ENCODE measurements at regions of chr7 and their contacts with region 1.

Region 1: GRCh38 chr7:77644774-77645173 is 51.5 kb upstream of the RSBN1L start:
- DNase-seq: no peak
- ATAC-seq: no peak
- H3K4me3 ChIP-seq: no peak overlapping the region
- H3K4me3 Mint-ChIP-seq: no peak overlapping the region
- H3K27ac ChIP-seq: no peak overlapping the region
- H3K27ac Mint-ChIP-seq: no peak overlapping the region
- H3K4me1 ChIP-seq: no peaks in the 10 kb centered on the region
- H3K4me1 Mint-ChIP-seq: no peaks in the 10 kb centered on the region
- H3K27me3 ChIP-seq: no peaks in the 10 kb centered on the region
- H3K27me3 Mint-ChIP-seq: no peaks in the 10 kb centered on the region
- CTCF ChIP-seq: no peak

Region 2: GRCh38 chr7:77542409-77542808 is 102.4 kb before region 1 on chr7:
- CTCF ChIA-PET with region 1: no interaction called
- POLR2A ChIA-PET with region 1: interaction called, 12 read pairs
- intact Hi-C with region 1: no loop called
- DNase-seq: no peak
- ATAC-seq: no peak
- H3K4me3 ChIP-seq: no peak overlapping the region
- H3K4me3 Mint-ChIP-seq: no peak overlapping the region
- H3K27ac ChIP-seq: peak overlapping the region in 1 of 2 donors; percentile 53
- H3K27ac Mint-ChIP-seq: peak overlapping the region; percentile 1
- H3K4me1 ChIP-seq: peaks cover 8 to 22% of the 10 kb centered on the region in 2 donors
- H3K4me1 Mint-ChIP-seq: peaks cover 46% of the 10 kb centered on the region
- H3K27me3 ChIP-seq: no peaks in the 10 kb centered on the region
- H3K27me3 Mint-ChIP-seq: no peaks in the 10 kb centered on the region
- CTCF ChIP-seq: no peak

Region 3: GRCh38 chr7:77674878-77675277 is 30.1 kb after region 1 on chr7:
- CTCF ChIA-PET with region 1: no interaction called
- POLR2A ChIA-PET with region 1: no interaction called
- intact Hi-C with region 1: no loop called
- DNase-seq: no peak
- ATAC-seq: no peak
- H3K4me3 ChIP-seq: no peak overlapping the region
- H3K4me3 Mint-ChIP-seq: no peak overlapping the region
- H3K27ac ChIP-seq: no peak overlapping the region
- H3K27ac Mint-ChIP-seq: no peak overlapping the region
- H3K4me1 ChIP-seq: no peaks in the 10 kb centered on the region
- H3K4me1 Mint-ChIP-seq: no peaks in the 10 kb centered on the region
- H3K27me3 ChIP-seq: no peaks in the 10 kb centered on the region
- H3K27me3 Mint-ChIP-seq: no peaks in the 10 kb centered on the region
- CTCF ChIP-seq: no peak

Region 4: DNA sequence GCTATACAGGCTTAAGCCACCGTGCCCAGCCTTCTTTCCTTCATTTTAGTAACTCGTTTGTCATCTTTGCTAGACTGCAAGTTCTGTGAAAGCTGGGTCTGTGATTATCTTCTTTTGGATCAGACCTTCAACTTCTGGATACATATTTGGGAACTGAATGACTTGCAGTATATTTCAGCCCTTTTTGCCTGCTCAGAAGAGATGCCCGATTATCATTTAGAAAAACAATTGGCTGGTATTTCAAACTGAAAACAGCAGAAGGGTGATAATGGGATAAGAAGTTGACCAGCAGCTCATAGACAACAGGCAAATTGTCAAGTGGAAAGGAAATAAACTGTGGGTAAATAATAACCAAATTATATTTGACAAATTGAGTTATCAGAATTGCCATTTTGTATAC is 66.1 kb after region 1 on chr7:
- CTCF ChIA-PET with region 1: no interaction called
- POLR2A ChIA-PET with region 1: no interaction called
- intact Hi-C with region 1: no loop called
- DNase-seq: no peak
- ATAC-seq: no peak
- H3K4me3 ChIP-seq: no peak overlapping the region
- H3K4me3 Mint-ChIP-seq: no peak overlapping the region
- H3K27ac ChIP-seq: no peak overlapping the region
- H3K27ac Mint-ChIP-seq: no peak overlapping the region
- H3K4me1 ChIP-seq: peaks cover 0 to 3% of the 10 kb centered on the region in 2 donors
- H3K4me1 Mint-ChIP-seq: peaks cover 42% of the 10 kb centered on the region
- H3K27me3 ChIP-seq: no peaks in the 10 kb centered on the region
- H3K27me3 Mint-ChIP-seq: no peaks in the 10 kb centered on the region
- CTCF ChIP-seq: no peak

Region 5: GRCh38 chr7:77771901-77772300 is 127.1 kb after region 1 on chr7:
- CTCF ChIA-PET with region 1: no interaction called
- POLR2A ChIA-PET with region 1: no interaction called
- intact Hi-C with region 1: no loop called
- DNase-seq: no peak
- ATAC-seq: no peak
- H3K4me3 ChIP-seq: no peak overlapping the region
- H3K4me3 Mint-ChIP-seq: no peak overlapping the region
- H3K27ac ChIP-seq: peak overlapping the region in 1 of 2 donors; percentile 41
- H3K27ac Mint-ChIP-seq: peak overlapping the region; percentile 18
- H3K4me1 ChIP-seq: no peaks in the 10 kb centered on the region
- H3K4me1 Mint-ChIP-seq: peaks cover 2% of the 10 kb centered on the region
- H3K27me3 ChIP-seq: no peaks in the 10 kb centered on the region
- H3K27me3 Mint-ChIP-seq: no peaks in the 10 kb centered on the region
- CTCF ChIP-seq: no peak

Measured in B cell (primary cell).